Naive thymus-derived CD4-positive, alpha-beta T cell (primary cell): ENCODE measurements at regions of chr15 and their contacts with region 1.

Region 1: GRCh38 chr15:74127260-74127953 is 3.0 kb upstream of the ISLR2 start:
- DNase-seq: peak; percentile 56 to 94 (median 77)
- ATAC-seq: peak; percentile 92
- H3K4me3 ChIP-seq: peak overlapping the region; percentile 9
- H3K4me3 Mint-ChIP-seq: peak overlapping the region in 9 of 10 donors; percentile 10 to 72 (median 40)
- H3K27ac ChIP-seq: no peak overlapping the region
- H3K27ac Mint-ChIP-seq: no peak overlapping the region
- H3K4me1 ChIP-seq: peaks cover 4 to 11% of the 10 kb centered on the region in 2 donors
- H3K4me1 Mint-ChIP-seq: peaks cover 12 to 30% (median 22%) of the 10 kb centered on the region in 7 donors
- H3K27me3 ChIP-seq: peaks cover 0 to 13% of the 10 kb centered on the region in 2 donors
- H3K27me3 Mint-ChIP-seq: peaks cover 56 to 82% (median 72%) of the 10 kb centered on the region in 5 donors

Region 2: GRCh38 chr15:74302821-74303359 is 175.5 kb after region 1 on chr15:
- CTCF ChIA-PET with region 1: interaction called, 3 read pairs
- POLR2A ChIA-PET with region 1: no interaction called
- intact Hi-C with region 1: loop called (anchors 1 to 2 kb)
- DNase-seq: peak in 3 of 9 donors; percentile 26 to 36 (median 29)
- ATAC-seq: no peak
- H3K4me3 ChIP-seq: no peak overlapping the region
- H3K4me3 Mint-ChIP-seq: no peak overlapping the region
- H3K27ac ChIP-seq: no peak overlapping the region
- H3K27ac Mint-ChIP-seq: no peak overlapping the region
- H3K4me1 ChIP-seq: no peaks in the 10 kb centered on the region
- H3K4me1 Mint-ChIP-seq: peaks cover 0 to 5% (median 0%) of the 10 kb centered on the region in 7 donors
- H3K27me3 ChIP-seq: no peaks in the 10 kb centered on the region
- H3K27me3 Mint-ChIP-seq: peaks cover 42 to 58% (median 50%) of the 10 kb centered on the region in 5 donors

Region 3: DNA sequence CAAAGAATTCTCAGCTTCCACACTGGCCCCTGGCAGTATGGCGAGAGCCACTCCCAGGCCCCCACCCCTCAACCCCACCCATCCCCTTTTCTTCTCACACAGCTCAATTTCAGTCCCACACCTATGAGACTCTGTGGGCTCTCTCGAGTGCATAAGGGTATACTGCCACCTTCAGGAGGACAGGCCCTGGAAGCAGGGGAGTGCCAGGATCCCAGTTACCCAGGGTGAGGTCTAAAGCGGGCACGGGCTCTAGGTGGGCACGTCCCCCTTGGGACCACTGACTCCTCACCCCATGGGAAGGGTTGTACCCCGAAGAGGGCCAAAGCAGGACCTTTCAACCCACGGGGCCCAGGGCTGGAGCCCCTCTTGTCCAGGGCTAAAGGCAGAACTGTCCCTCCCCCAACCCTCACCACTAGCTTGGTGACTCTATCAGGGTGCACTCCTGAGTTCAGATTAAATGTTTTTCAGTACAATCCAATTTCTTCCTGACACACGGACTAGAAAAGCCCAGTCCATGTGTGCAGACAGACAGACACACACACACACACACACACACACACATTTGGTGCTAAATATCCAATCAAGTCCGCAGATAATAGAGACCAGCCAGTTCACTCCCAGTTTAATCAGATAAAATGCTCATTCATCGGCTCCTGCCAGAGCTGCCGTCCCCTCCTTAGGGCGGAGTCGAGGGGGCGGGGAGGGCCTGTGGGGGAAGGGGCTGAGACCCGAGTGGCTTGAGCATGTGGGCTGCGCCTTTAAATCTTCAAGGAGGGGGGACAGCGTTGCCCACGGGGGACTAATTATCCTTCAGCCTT is 180.6 kb after region 1 on chr15:
- CTCF ChIA-PET with region 1: interaction called, 3 read pairs
- POLR2A ChIA-PET with region 1: no interaction called
- intact Hi-C with region 1: loop called (anchors 1 to 2 kb)
- DNase-seq: peak in 2 of 9 donors; percentile 18 to 28
- ATAC-seq: peak; percentile 64
- H3K4me3 ChIP-seq: no peak overlapping the region
- H3K4me3 Mint-ChIP-seq: no peak overlapping the region
- H3K27ac ChIP-seq: no peak overlapping the region
- H3K27ac Mint-ChIP-seq: no peak overlapping the region
- H3K4me1 ChIP-seq: no peaks in the 10 kb centered on the region
- H3K4me1 Mint-ChIP-seq: peaks cover 0 to 1% (median 0%) of the 10 kb centered on the region in 7 donors
- H3K27me3 ChIP-seq: no peaks in the 10 kb centered on the region
- H3K27me3 Mint-ChIP-seq: peaks cover 17 to 31% (median 25%) of the 10 kb centered on the region in 5 donors